ENCODE measurements at regions of chr1 and their contacts with region 1.

Region 1: DNA sequence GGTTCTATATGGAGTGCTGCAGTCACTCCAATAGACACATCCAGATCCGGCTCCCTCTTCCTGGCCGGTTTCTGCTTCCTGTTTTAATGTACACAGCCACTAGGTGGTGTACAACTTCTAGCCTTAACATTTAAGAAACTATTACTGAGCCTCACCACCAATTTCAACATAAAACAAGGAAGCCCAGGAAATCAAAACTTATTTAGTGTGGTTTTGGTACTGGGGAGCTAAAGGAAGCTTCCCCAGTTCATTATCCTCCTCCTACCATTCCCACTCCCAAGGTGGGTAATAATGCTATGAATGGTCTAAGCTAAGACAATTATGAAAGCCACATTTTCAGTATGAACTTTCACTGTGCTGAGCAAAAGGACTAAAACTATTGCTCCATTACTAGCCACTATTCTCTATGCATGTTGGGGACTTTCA is 25.5 kb upstream of the MTMR11 start:
- DNase-seq: peak in 6 of 7 donors; percentile 55 to 86 (median 64)
- H3K4me3 ChIP-seq: no peak overlapping the region
- H3K27ac ChIP-seq: peak overlapping the region in 4 of 5 donors; percentile 48 to 75 (median 62)
- H3K4me1 ChIP-seq: peaks cover 16 to 20% of the 10 kb centered on the region in 2 donors
- H3K27me3 ChIP-seq: no peaks in the 10 kb centered on the region
- CTCF ChIP-seq: peak; percentile 67 to 90 (median 84)
- POLR2A ChIP-seq: no peak

Region 2: GRCh38 chr1:149937060-149937705 is 25.0 kb before region 1 on chr1:
- intact Hi-C with region 1: no loop called
- DNase-seq: peak in 5 of 7 donors; percentile 43 to 79 (median 60)
- H3K4me3 ChIP-seq: peak overlapping the region in 3 of 4 donors; percentile 43 to 89 (median 62)
- H3K27ac ChIP-seq: peak overlapping the region; percentile 52 to 92 (median 61)
- H3K4me1 ChIP-seq: peaks cover 33 to 46% of the 10 kb centered on the region in 2 donors
- H3K27me3 ChIP-seq: no peaks in the 10 kb centered on the region
- CTCF ChIP-seq: no peak
- POLR2A ChIP-seq: peak in 1 of 2 donors; percentile 70

Region 3: DNA sequence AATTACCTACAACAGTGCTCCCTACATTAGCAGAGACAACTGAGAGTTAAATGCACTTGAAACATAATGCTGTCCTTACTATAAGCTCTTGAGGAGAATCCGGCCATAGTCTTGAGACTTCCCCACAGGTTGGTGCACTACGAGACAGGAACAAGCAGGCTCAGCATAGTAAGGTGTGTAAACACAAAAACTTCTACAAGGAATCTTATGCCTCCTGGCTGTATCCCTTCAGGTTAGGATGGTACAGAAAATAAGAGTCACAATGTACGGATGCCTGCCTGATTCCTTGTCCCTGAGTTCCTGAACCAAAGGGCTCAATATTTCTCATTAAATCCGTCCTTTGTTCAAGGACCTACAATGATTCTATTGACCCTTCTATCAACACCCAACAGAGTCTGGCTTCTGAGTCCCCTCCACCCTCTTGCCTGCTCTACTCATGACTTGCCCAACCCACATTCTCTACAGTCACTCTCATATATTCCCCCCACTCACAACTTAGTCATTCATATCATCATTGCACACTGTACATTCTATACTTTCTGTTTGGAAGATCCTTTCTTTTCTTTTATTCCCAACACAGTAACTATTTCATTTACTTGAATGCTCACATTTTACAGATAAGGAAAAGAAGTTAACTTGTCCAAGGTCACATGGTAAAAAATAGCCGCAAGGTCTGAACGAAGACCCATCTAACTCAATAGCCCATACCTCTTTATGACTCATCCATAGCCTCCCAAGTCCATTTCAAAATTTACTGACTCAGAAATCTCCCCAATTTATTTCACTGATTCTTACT is 44.7 kb after region 1 on chr1:
- intact Hi-C with region 1: no loop called
- DNase-seq: no peak
- H3K4me3 ChIP-seq: peak overlapping the region in 1 of 4 donors; percentile 91
- H3K27ac ChIP-seq: peak overlapping the region in 2 of 5 donors; percentile 24
- H3K4me1 ChIP-seq: peaks cover 41 to 60% of the 10 kb centered on the region in 2 donors
- H3K27me3 ChIP-seq: no peaks in the 10 kb centered on the region
- CTCF ChIP-seq: no peak
- POLR2A ChIP-seq: no peak

Region 4: GRCh38 chr1:150053926-150054325 is 91.8 kb after region 1 on chr1:
- intact Hi-C with region 1: loop called (anchors 5 kb)
- DNase-seq: no peak
- H3K4me3 ChIP-seq: no peak overlapping the region
- H3K27ac ChIP-seq: no peak overlapping the region
- H3K4me1 ChIP-seq: peaks cover 0 to 8% of the 10 kb centered on the region in 2 donors
- H3K27me3 ChIP-seq: no peaks in the 10 kb centered on the region
- CTCF ChIP-seq: no peak
- POLR2A ChIP-seq: no peak

Region 5: GRCh38 chr1:150168960-150169601 is 206.9 kb after region 1 on chr1:
- intact Hi-C with region 1: loop called in 1 of 2 experiments (anchors 5 kb)
- DNase-seq: peak; percentile 52 to 88 (median 75)
- H3K4me3 ChIP-seq: no peak overlapping the region
- H3K27ac ChIP-seq: no peak overlapping the region
- H3K4me1 ChIP-seq: peaks cover 0 to 12% of the 10 kb centered on the region in 2 donors
- H3K27me3 ChIP-seq: no peaks in the 10 kb centered on the region
- CTCF ChIP-seq: peak; percentile 70 to 89 (median 83)
- POLR2A ChIP-seq: no peak

Region 6: GRCh38 chr1:150186789-150187559 is 224.8 kb after region 1 on chr1:
- intact Hi-C with region 1: loop called in 1 of 2 experiments (anchors 10 kb)
- DNase-seq: peak in 5 of 7 donors; percentile 31 to 56 (median 43)
- H3K4me3 ChIP-seq: peak overlapping the region in 1 of 4 donors; percentile 22
- H3K27ac ChIP-seq: peak overlapping the region; percentile 32 to 69 (median 54)
- H3K4me1 ChIP-seq: peaks cover 0 to 11% of the 10 kb centered on the region in 2 donors
- H3K27me3 ChIP-seq: no peaks in the 10 kb centered on the region
- CTCF ChIP-seq: peak; percentile 39 to 67 (median 54)
- POLR2A ChIP-seq: no peak

Measured in adrenal gland (tissue), 19 donors.